Gastrocnemius medialis (tissue), 4 donors: ENCODE measurements at regions of chr2 and their contacts with region 1.

Region 1: DNA sequence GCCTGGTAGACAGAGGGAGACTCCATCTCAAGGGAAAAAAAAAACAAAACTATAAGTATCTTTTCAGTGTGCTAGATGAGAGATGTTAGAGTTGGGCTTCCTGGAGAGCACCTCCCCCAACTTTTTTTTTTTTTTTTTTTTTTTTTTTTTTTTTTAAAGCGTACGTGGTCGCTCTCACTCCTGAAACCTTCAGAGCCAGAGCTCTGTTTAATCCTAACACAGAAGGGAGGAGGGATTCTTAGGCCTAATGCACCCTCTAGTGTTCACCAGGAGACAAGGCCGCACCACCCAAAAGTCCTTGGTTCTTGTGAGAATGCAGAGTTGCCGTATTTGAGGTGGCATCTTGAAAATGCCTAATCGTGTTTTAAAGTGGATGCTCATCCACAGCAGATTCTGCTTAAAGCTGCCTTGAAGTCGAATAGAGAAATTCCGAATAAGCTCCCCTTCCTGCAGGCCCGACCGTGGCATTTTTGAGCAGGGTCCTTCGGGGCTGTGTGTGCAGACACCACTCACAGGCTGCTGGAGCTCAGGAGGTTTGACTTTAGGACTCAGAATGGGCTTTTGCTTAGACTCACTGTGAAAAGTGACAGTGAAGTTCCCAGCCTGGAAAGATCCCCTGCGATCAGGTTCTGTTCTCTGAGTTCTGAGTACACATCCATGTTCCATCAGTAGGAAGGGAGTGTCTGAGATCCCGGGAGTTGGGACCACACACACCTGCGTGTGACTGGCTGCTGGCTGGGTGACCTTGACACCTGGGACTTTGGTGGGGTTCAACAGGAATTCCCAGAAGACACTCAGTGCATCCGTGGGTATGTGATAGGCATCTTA is 252.6 kb downstream of the AGAP1 start:
- DNase-seq: peak; percentile 23 to 62
- ATAC-seq: peak; percentile 90 to 92
- H3K4me3 ChIP-seq: no peak overlapping the region
- H3K27ac ChIP-seq: no peak overlapping the region
- H3K4me1 ChIP-seq: peaks cover 3 to 11% of the 10 kb centered on the region in 2 donors
- H3K27me3 ChIP-seq: no peaks in the 10 kb centered on the region
- CTCF ChIP-seq: peak; percentile 76 to 87 (median 83)
- POLR2A ChIP-seq: no peak

Region 2: DNA sequence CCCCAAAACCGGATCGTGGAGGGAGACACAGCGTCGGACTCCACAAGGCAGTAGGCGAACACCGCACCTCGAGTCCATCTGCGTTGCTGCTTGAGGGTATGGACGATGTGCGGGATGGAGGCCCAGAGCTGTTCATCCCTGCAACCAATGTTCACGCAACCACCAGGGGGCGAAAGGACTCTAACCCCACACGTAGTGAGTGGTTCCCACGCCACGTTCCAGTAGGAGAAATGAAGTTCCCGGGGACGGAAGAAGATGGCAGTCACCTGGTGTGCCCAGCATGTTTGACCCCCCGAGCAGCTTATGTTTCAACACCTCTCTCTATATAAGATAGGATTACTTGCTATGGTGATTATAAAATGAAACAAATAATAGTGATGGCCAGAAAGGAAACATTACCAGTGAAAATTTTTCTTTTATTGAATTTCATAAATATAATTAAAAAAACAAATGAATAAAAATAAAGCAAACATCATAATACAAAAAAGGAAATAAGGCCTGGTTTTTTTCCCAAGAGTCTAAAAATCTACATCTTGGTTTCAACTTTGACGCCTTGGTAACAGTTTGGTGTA is 610.4 kb before region 1 on chr2:
- in situ Hi-C with region 1: loop called (anchors 10 kb)
- intact Hi-C with region 1: loop called (anchors 5 kb)
- DNase-seq: peak; percentile 32 to 40
- ATAC-seq: peak; percentile 51 to 68
- H3K4me3 ChIP-seq: no peak overlapping the region
- H3K27ac ChIP-seq: no peak overlapping the region
- H3K4me1 ChIP-seq: no peaks in the 10 kb centered on the region
- H3K27me3 ChIP-seq: no peaks in the 10 kb centered on the region
- CTCF ChIP-seq: peak; percentile 20 to 65 (median 52)
- POLR2A ChIP-seq: no peak

Region 3: GRCh38 chr2:235433860-235434259 is 312.6 kb before region 1 on chr2:
- in situ Hi-C with region 1: loop called in 2 of 4 experiments (anchors 10 kb)
- intact Hi-C with region 1: loop called (anchors 2 kb)
- DNase-seq: peak; percentile 34 to 72
- ATAC-seq: peak; percentile 85 to 90
- H3K4me3 ChIP-seq: no peak overlapping the region
- H3K27ac ChIP-seq: peak overlapping the region; percentile 31 to 56 (median 48)
- H3K4me1 ChIP-seq: peaks cover 18 to 19% of the 10 kb centered on the region in 2 donors
- H3K27me3 ChIP-seq: no peaks in the 10 kb centered on the region
- CTCF ChIP-seq: peak in 2 of 5 experiments; percentile 23 to 25
- POLR2A ChIP-seq: no peak

Region 4: GRCh38 chr2:235605312-235606003 is 141.0 kb before region 1 on chr2:
- in situ Hi-C with region 1: loop called (anchors 5 to 10 kb)
- intact Hi-C with region 1: no loop called
- DNase-seq: peak; percentile 61 to 78
- ATAC-seq: peak; percentile 84
- H3K4me3 ChIP-seq: no peak overlapping the region
- H3K27ac ChIP-seq: no peak overlapping the region
- H3K4me1 ChIP-seq: peaks cover 0 to 16% of the 10 kb centered on the region in 2 donors
- H3K27me3 ChIP-seq: peaks cover 0 to 4% (median 0%) of the 10 kb centered on the region in 3 donors
- CTCF ChIP-seq: no peak
- POLR2A ChIP-seq: no peak

Region 5: DNA sequence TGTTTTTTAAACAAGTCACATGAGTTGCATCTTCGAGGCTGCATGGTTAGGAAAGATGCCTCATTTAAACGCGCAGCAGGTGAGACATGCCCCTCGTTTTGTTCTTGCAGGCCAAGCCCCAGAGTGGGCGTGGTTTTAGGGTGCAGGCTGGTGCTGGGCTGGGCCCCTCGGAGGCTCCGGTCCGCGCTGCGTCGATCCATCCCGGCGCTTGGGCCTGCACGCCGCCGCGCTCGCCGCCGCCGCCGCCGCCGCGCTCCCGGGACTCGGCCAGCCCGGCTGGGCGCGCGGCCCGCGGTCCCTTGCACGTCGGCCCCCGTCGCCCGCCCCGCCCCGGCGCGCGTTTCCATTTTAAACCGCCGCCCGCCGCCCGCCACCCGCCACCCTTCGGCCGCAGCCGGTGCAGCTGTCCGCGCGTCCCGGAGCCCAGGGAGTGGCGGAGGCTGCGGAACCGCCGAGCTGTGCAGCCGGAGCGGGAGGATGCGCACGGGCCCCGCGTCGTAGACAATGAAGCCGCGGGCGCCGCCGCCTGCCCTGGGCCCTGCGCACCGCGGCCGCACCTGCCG is 77.1 kb before region 1 on chr2:
- in situ Hi-C with region 1: loop called in 1 of 4 experiments (anchors 10 kb)
- intact Hi-C with region 1: loop called (anchors 2 kb)
- DNase-seq: peak; percentile 33 to 58
- ATAC-seq: peak; percentile 64 to 66
- H3K4me3 ChIP-seq: peak overlapping the region; percentile 38 to 49 (median 46)
- H3K27ac ChIP-seq: no peak overlapping the region
- H3K4me1 ChIP-seq: peaks cover 14 to 22% of the 10 kb centered on the region in 2 donors
- H3K27me3 ChIP-seq: no peaks in the 10 kb centered on the region
- CTCF ChIP-seq: peak in 1 of 5 experiments; percentile 26
- POLR2A ChIP-seq: no peak

Region 6: DNA sequence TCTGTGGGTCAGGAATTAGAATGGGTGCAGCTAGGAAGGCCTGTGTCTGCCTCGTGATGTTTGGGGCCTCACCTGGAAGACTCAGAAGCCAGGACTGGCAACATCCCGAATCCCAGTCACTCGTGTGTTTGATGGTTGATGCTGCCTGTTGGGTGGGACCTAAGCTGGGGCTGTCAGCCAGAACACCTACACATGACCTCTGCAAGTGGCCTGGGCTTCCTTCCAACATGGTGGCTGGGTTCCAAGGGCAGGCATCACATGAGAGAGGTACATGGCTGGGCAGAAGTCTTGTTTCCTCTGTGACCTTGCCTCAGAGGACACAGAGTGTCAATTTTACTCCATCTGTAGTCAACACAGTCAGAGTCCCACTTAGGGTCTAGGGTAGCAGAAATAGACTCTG is 243.9 kb after region 1 on chr2:
- in situ Hi-C with region 1: no loop called
- intact Hi-C with region 1: no loop called
- DNase-seq: no peak
- ATAC-seq: no peak
- H3K4me3 ChIP-seq: no peak overlapping the region
- H3K27ac ChIP-seq: no peak overlapping the region
- H3K4me1 ChIP-seq: no peaks in the 10 kb centered on the region
- H3K27me3 ChIP-seq: no peaks in the 10 kb centered on the region
- CTCF ChIP-seq: no peak
- POLR2A ChIP-seq: no peak